Sigmoid colon (tissue), 7 donors: ENCODE measurements at regions of chr1 and their contacts with region 1.

Region 1: GRCh38 chr1:24391882-24392603 is 21.5 kb downstream of the STPG1 start:
- DNase-seq: peak; percentile 83
- H3K4me3 ChIP-seq: peak overlapping the region in 2 of 4 donors; percentile 22 to 27
- H3K27ac ChIP-seq: peak overlapping the region; percentile 75 to 84 (median 84)
- H3K4me1 ChIP-seq: peaks cover 3 to 27% (median 24%) of the 10 kb centered on the region in 4 donors
- H3K27me3 ChIP-seq: no peaks in the 10 kb centered on the region
- CTCF ChIP-seq: peak; percentile 53 to 84 (median 69)
- EP300 ChIP-seq: no peak
- POLR2A ChIP-seq: no peak

Region 2: GRCh38 chr1:24289937-24290595 is 102.0 kb before region 1 on chr1:
- intact Hi-C with region 1: loop called (anchors 2 kb)
- DNase-seq: peak; percentile 95
- H3K4me3 ChIP-seq: no peak overlapping the region
- H3K27ac ChIP-seq: peak overlapping the region in 3 of 4 donors; percentile 30 to 62 (median 61)
- H3K4me1 ChIP-seq: peaks cover 0 to 28% (median 21%) of the 10 kb centered on the region in 4 donors
- H3K27me3 ChIP-seq: no peaks in the 10 kb centered on the region
- CTCF ChIP-seq: no peak
- EP300 ChIP-seq: peak in 1 of 4 donors; percentile 25
- POLR2A ChIP-seq: no peak